ENCODE measurements at regions of chr3 and their contacts with region 1.

Region 1: DNA sequence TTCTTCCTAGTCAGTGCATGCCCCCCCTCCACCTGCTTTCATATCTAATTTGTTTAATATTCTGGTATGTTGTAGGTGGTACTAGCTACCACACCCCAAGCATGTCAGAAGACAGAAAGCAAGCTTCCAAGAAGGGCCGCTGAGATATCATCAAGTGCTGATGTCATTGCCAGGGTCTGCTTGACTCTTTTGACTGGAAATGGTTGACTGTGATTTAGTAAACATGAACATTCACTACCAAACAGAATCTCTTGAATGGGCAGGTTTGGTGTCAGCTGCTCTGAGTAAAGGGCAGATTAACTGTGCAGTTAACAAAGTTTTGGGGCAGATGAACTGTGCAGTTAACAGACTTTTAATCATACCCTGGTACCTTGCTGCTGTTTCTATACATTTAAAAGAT is 244.2 kb upstream of the SATB1 start:
- DNase-seq: peak; percentile 77
- H3K4me3 Mint-ChIP-seq: peak overlapping the region; percentile 18
- H3K27ac Mint-ChIP-seq: peak overlapping the region; percentile 89
- H3K4me1 Mint-ChIP-seq: peaks cover 53% of the 10 kb centered on the region
- H3K27me3 Mint-ChIP-seq: no peaks in the 10 kb centered on the region

Region 2: DNA sequence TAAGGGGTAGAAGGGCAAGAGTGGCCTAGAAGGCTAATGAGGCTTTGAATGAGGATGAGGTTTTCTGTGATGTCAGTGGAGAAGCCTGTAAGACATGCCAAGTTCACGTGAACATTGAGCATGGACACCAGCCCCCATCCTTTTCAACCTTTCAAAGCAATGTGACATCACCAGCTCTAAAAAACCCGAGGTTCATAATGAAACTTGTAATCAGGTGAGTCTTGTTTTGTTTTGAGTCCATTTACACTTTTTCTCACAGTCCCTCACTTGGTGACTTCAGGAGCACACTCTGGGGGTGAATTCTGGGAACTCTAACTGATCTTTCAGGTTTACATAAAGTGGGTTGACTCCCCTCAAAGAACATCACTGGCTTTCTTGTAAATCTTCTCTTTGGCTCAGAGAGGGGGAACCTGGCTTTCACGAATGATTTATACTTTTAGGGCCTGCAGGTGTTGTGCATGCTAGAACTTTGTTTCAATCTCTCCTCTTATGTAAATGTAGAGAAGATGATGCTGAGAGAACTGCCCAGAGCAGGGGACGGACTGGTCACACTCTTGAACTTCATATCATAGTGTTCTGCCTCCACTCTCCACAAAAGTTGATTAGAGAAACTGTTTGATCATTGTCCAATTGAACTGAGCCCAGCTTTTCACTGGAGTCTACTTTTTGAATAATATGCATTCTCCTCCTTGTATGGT is 19.6 kb before region 1 on chr3:
- CTCF ChIA-PET with region 1: interaction called, 3 read pairs
- POLR2A ChIA-PET with region 1: interaction called, 14 read pairs
- intact Hi-C with region 1: loop called (anchors 1 kb)
- DNase-seq: peak; percentile 76
- H3K4me3 Mint-ChIP-seq: peak overlapping the region; percentile 30
- H3K27ac Mint-ChIP-seq: peak overlapping the region; percentile 98
- H3K4me1 Mint-ChIP-seq: peaks cover 89% of the 10 kb centered on the region
- H3K27me3 Mint-ChIP-seq: no peaks in the 10 kb centered on the region

Region 3: GRCh38 chr3:18657858-18658820 is 11.2 kb before region 1 on chr3:
- CTCF ChIA-PET with region 1: interaction called, 4 read pairs
- POLR2A ChIA-PET with region 1: interaction called, 17 read pairs
- intact Hi-C with region 1: loop called (anchors 1 kb)
- DNase-seq: peak; percentile 59
- H3K4me3 Mint-ChIP-seq: peak overlapping the region; percentile 67
- H3K27ac Mint-ChIP-seq: peak overlapping the region; percentile 78
- H3K4me1 Mint-ChIP-seq: peaks cover 78% of the 10 kb centered on the region
- H3K27me3 Mint-ChIP-seq: no peaks in the 10 kb centered on the region

Region 4: GRCh38 chr3:18751514-18751913 is 82.1 kb after region 1 on chr3:
- CTCF ChIA-PET with region 1: no interaction called
- POLR2A ChIA-PET with region 1: no interaction called
- intact Hi-C with region 1: no loop called
- DNase-seq: no peak
- H3K4me3 Mint-ChIP-seq: no peak overlapping the region
- H3K27ac Mint-ChIP-seq: no peak overlapping the region
- H3K4me1 Mint-ChIP-seq: peaks cover 60% of the 10 kb centered on the region
- H3K27me3 Mint-ChIP-seq: no peaks in the 10 kb centered on the region

Measured in activated CD4-positive, alpha-beta memory T cell treated with anti-CD3 and anti-CD28 coated beads for 36 hours (primary cell).